Ascending aorta (tissue), 2 donors: ENCODE measurements at regions of chr2 and their contacts with region 1.

Region 1: GRCh38 chr2:207625018-207625907 is at the start of gene METTL21A:
- DNase-seq: peak; percentile 55 to 92
- H3K4me3 ChIP-seq: peak within 1 kb of the TSS; percentile 93 to 96
- H3K27ac ChIP-seq: peak within 1 kb of the TSS; percentile 95 to 97
- H3K4me1 ChIP-seq: peaks cover 0 to 18% of the 10 kb centered on the region in 2 donors
- H3K27me3 ChIP-seq: no peaks in the 10 kb centered on the region
- CTCF ChIP-seq: peak; percentile 46 to 50 (median 50)
- total RNA-seq, gene METTL21A: 1.5 TPM

Region 2: DNA sequence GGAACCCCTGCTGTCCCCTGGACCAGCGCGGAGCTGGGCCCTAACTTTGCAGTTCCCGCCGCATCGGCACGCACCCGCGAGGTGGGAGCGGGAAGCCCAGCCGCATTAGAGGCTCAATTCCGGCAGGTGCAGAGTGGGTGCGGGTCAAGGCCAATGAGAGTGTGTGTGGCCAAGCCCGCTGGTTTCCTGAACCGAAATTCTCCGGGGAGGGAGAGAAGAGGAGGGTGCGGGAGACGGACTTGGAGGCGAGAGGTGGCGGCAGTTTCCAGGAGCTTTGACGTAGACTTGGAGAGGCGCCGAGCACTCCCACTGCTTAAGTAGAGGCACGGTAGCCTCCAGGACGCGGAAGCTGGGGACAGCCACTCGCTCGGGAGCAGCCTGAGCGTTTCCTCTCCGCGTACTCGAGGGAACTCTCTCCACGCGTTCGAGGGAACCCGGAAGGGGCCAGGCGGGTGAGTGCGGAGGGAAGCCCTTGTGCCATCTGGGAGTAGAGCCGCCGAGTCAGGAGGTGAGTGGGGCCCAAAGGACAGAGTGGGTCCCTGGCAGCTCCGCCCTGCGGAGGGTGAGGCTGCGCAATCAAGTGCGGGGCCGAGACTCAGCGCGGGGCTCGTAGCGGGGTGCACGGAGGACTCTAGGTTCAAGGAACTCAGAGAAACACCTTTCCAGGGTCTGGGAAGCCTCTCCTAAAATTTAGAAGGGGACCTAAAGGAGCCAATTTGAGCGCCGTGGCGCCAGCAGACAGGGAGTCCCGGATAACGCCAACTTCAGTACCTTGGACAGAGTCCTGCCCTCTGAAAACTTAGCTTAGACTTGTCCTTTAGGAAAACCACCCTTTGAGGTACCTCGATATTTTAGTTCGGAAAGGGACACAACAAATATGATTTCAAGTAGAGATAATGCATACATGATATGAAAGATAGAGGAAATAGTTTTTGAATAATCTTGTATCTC is 982.9 kb before region 1 on chr2 and contains the start of gene FAM237A:
- intact Hi-C with region 1: no loop called
- DNase-seq: no peak
- H3K4me3 ChIP-seq: peak within 1 kb of the TSS in 1 of 2 donors; percentile 2
- H3K27ac ChIP-seq: no peak within 1 kb of the TSS
- H3K4me1 ChIP-seq: no peaks in the 10 kb centered on the region
- H3K27me3 ChIP-seq: no peaks in the 10 kb centered on the region
- CTCF ChIP-seq: no peak
- total RNA-seq, gene FAM237A: not detected

Region 3: DNA sequence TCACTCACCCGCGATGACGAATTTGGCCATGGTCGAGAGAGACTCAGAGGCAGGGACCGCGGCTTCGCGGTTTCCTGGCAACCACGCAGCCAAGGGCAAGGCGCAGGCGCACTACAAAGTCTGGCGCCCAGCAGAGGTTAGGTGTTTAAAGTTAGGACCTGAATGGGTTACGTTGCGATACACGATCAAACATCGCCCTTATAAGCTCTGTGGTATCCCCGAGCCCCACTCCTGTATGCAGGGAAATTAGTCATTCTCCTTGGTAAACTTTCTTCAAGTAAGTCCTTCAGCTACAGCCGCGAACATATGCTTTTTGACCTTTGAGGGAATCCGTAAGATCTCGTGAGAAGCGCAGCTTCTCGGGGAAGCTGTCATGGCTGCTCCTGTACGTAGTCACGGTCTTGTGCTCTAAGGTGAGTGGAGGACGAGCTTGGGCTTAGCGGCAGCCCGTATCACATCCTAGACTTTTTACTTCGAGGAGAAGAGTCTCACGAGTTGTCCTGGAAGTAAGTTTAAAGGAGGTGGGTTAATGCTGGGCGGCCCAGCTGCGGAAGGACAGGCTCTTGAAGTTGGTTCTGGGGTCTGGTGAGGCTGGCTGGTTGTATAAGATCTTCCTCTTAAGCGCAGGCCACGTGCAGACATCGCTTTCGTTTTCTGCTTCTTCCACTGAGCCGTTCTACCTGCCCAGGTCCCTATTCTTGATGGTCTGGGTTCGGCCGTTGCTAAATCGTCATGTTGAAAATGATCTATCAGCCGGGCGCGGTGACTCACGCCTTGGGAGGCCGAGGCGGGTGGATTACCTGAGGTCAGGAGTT is 859.8 kb before region 1 on chr2 and contains the starts of genes FASTKD2 and MDH1B:
- intact Hi-C with region 1: loop called (anchors 10 kb)
- DNase-seq: peak; percentile 77 to 97
- H3K4me3 ChIP-seq: peak within 1 kb of the TSS; percentile 85 to 92
- H3K27ac ChIP-seq: peak within 1 kb of the TSS; percentile 85 to 90
- H3K4me1 ChIP-seq: peaks cover 5 to 24% of the 10 kb centered on the region in 2 donors
- H3K27me3 ChIP-seq: no peaks in the 10 kb centered on the region
- CTCF ChIP-seq: no peak
- total RNA-seq, gene FASTKD2: 41.5 TPM
- total RNA-seq, gene MDH1B: not detected

Region 4: GRCh38 chr2:207103132-207103531 is 522.1 kb before region 1 on chr2:
- intact Hi-C with region 1: no loop called
- DNase-seq: no peak
- H3K4me3 ChIP-seq: no peak overlapping the region
- H3K27ac ChIP-seq: no peak overlapping the region
- H3K4me1 ChIP-seq: no peaks in the 10 kb centered on the region
- H3K27me3 ChIP-seq: no peaks in the 10 kb centered on the region
- CTCF ChIP-seq: no peak

Region 5: DNA sequence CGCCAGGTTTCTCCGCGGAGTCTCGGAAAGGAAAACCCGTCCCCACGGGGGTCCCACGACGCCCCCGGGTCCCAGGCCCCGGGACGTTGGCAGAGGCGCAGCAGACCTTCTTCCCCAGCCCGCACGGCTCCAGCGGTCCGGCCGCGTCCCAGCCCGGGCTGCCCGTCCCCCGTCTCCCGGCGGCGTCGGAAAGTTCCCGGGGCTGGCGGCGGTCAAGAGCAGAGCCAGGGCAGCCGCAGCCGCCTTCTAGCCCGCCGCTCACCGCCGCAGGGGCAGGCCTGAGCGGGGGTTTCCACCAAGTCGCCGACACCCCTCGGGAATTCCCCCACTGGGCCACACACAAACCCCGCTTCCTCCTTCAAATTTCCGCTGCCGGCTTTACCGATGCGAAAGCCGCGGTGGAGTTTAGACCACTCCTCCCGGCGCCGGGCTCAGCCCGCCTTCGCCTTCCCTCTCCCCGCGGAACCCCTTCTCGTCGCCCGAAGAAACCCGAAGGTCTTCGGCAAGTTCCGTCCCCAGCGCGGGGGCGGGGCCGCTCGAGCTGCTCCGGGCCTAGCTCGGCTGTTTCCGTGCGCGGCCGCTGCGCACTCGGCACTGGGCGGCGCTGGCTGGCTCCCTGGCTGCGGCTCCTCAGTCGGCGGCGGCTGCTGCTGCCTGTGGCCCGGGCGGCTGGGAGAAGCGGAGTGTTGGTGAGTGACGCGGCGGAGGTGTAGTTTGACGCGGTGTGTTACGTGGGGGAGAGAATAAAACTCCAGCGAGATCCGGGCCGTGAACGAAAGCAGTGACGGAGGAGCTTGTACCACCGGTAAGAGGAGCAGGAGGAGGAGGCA is 95.7 kb before region 1 on chr2 and contains the start of gene CREB1:
- intact Hi-C with region 1: loop called (anchors 1 kb)
- DNase-seq: peak; percentile 97 to 99
- H3K4me3 ChIP-seq: peak within 1 kb of the TSS; percentile 80 to 95
- H3K27ac ChIP-seq: peak within 1 kb of the TSS; percentile 96 to 97
- H3K4me1 ChIP-seq: peaks cover 7 to 30% of the 10 kb centered on the region in 2 donors
- H3K27me3 ChIP-seq: no peaks in the 10 kb centered on the region
- CTCF ChIP-seq: peak in 1 of 3 experiments; percentile 1
- total RNA-seq, gene CREB1: 12.8 TPM

Region 6: DNA sequence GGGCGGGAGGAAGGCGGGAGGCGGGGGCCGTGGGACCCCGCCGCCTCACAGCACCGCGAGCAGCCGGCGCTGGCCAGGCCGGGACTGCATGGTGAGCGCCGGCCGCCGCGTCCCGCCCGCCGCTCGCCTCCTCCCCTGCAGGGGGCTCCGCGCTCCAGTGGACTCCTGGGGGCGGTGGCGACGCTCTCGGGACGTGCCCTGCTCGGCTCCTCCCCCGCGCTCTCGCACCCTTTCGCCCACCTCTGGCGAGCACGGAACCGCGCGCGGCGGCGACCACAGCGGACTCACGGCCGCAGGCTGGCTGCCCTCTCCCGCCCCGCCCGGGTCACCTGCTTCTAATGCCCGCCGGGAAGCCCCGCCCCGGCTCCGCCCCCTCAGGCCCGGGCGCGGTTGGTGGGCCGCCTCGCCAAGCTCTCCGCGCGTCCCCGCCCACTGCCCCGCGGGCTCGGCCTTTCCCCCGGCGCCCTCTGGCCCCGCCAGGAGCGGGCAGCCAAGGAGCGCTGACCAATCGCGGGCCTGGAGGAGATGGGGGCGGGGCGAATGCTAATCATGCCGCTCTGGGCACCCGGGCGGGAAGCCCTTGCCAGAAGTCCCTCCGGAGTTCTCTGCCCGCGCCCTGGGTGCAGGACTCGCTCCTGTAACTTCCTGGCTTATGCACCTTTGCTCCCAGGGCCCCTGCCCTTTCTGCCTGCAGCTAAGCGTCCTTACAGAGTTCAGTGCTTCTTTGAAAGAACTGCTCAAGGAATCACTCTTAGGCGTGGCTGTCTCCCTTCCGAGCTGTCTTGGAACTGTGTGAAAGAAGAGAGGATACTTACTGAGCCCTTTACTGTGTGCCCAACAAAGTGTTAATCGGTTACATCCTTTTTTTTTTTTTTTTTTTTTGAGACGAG is 144.6 kb after region 1 on chr2 and contains the start of gene FZD5:
- intact Hi-C with region 1: loop called (anchors 1 kb)
- DNase-seq: peak; percentile 87 to 98
- H3K4me3 ChIP-seq: peak within 1 kb of the TSS; percentile 75 to 83
- H3K27ac ChIP-seq: peak within 1 kb of the TSS; percentile 61 to 65
- H3K4me1 ChIP-seq: peaks cover 8 to 9% of the 10 kb centered on the region in 2 donors
- H3K27me3 ChIP-seq: no peaks in the 10 kb centered on the region
- CTCF ChIP-seq: peak; percentile 45 to 68 (median 47)
- total RNA-seq, gene FZD5: 6.9 TPM

Region 7: GRCh38 chr2:208072250-208072892 is 447.1 kb after region 1 on chr2:
- intact Hi-C with region 1: loop called (anchors 2 kb)
- DNase-seq: peak in 1 of 2 donors; percentile 78
- H3K4me3 ChIP-seq: no peak overlapping the region
- H3K27ac ChIP-seq: no peak overlapping the region
- H3K4me1 ChIP-seq: no peaks in the 10 kb centered on the region
- H3K27me3 ChIP-seq: no peaks in the 10 kb centered on the region
- CTCF ChIP-seq: peak; percentile 63 to 74 (median 70)